Caco-2 (cell line): ENCODE measurements at regions of chr22 and their contacts with region 1.

Region 1: GRCh38 chr22:17171313-17172171 is 12.5 kb upstream of the HDHD5 start:
- DNase-seq: peak; percentile 89 to 94
- H3K4me3 ChIP-seq: peak overlapping the region; percentile 69
- H3K4me3 Mint-ChIP-seq: peak overlapping the region; percentile 89
- H3K27ac Mint-ChIP-seq: peak overlapping the region; percentile 84
- H3K4me1 ChIP-seq: 0 out of 2 replicates have a peak, but pooled peaks cover 3% of the 10 kb centered on the region
- H3K4me1 Mint-ChIP-seq: peaks cover 7% of the 10 kb centered on the region
- H3K27me3 ChIP-seq: no peaks in the 10 kb centered on the region
- H3K27me3 Mint-ChIP-seq: peaks cover 5% of the 10 kb centered on the region
- CTCF ChIP-seq: peak; percentile 65 to 93

Region 2: DNA sequence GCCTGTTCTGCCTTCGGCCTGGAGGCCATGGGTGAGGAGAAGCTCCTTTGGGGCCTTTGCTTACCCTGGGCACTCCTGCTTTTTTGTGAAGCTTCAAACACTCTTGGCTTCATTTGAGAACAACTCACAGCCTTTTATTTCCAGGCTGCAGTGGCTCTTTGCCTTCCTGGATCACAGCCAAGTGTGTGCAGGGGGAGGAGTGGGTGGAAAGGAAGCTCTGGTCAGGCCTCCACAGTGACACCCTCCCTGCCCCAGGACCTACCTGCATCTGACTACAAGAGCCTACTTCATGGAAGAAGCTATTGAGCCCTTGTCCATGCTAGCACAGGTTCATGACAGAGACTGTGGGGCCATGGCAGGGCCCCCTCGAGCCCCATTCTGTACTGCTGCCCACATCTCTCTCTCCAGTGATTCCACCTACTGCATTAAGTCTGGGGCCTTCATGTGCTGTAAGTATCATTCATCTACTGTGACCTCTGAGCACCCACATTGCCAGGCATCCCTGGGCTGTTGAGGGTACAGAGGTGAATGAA is 215.8 kb before region 1 on chr22:
- CTCF ChIA-PET with region 1: no interaction called
- POLR2A ChIA-PET with region 1: no interaction called
- intact Hi-C with region 1: no loop called
- DNase-seq: no peak
- H3K4me3 ChIP-seq: no peak overlapping the region
- H3K4me3 Mint-ChIP-seq: no peak overlapping the region
- H3K27ac Mint-ChIP-seq: no peak overlapping the region
- H3K4me1 ChIP-seq: no peaks in the 10 kb centered on the region
- H3K4me1 Mint-ChIP-seq: no peaks in the 10 kb centered on the region
- H3K27me3 ChIP-seq: no peaks in the 10 kb centered on the region
- H3K27me3 Mint-ChIP-seq: peaks cover 2% of the 10 kb centered on the region
- CTCF ChIP-seq: no peak

Region 3: DNA sequence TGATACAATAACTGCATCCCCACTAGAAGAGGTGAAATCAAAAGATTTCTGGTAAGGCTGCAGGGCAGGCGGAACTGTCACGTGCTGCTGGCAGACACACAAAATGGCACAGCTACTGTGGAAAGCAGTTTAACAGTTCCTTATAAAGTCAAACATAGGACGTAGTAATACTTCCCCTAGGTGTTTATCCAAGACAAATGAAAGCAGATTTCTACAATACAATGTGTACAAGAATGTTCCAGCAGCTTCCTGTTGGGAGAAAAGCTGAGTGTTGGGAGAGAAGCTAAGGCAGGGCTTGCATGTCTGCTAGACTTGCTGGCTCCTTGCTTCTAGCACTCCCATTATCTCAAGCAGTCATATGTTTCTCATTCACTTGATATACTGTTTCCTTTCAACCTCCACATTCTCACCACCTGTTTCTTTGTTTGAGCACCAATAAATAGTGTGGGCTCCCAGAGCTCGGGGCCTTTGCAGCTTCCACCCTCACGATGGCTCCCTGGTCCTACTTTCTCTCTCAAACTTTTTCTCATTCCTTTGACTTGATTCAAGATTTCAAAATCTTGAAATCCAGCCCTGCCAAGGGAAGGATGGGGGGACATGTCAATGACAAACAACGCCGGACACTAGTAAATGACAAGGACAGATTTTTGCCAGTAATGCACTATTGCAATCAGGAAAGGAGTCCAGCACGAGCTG is 108.0 kb before region 1 on chr22:
- CTCF ChIA-PET with region 1: interaction called, 10 read pairs
- POLR2A ChIA-PET with region 1: no interaction called
- intact Hi-C with region 1: no loop called
- DNase-seq: no peak
- H3K4me3 ChIP-seq: no peak overlapping the region
- H3K4me3 Mint-ChIP-seq: no peak overlapping the region
- H3K27ac Mint-ChIP-seq: no peak overlapping the region
- H3K4me1 ChIP-seq: peaks cover 12% of the 10 kb centered on the region
- H3K4me1 Mint-ChIP-seq: peaks cover 18% of the 10 kb centered on the region
- H3K27me3 ChIP-seq: no peaks in the 10 kb centered on the region
- H3K27me3 Mint-ChIP-seq: no peaks in the 10 kb centered on the region
- CTCF ChIP-seq: no peak

Region 4: DNA sequence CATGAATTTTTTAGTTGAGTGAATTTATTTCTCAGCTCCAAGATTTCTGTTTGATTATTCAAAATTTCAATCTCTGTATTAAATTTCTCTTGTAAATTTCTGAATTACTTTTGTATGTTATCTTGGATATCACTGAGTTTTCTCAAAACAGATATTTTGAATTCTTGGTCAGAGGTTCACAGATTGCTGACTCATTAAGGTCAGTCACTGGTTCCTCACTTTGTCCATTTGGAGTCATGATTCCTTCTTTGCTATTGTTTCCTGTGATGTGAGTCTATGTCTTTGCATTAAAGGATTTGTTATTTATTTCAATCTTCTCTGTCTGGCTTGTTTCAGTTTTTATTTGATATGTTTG is 96.9 kb before region 1 on chr22:
- CTCF ChIA-PET with region 1: interaction called, 13 read pairs
- POLR2A ChIA-PET with region 1: no interaction called
- intact Hi-C with region 1: loop called (anchors 1 kb)
- DNase-seq: no peak
- H3K4me3 ChIP-seq: no peak overlapping the region
- H3K4me3 Mint-ChIP-seq: no peak overlapping the region
- H3K27ac Mint-ChIP-seq: no peak overlapping the region
- H3K4me1 ChIP-seq: no peaks in the 10 kb centered on the region
- H3K4me1 Mint-ChIP-seq: no peaks in the 10 kb centered on the region
- H3K27me3 ChIP-seq: no peaks in the 10 kb centered on the region
- H3K27me3 Mint-ChIP-seq: peaks cover 4% of the 10 kb centered on the region
- CTCF ChIP-seq: no peak

Region 5: GRCh38 chr22:17087498-17088131 is 83.9 kb before region 1 on chr22:
- CTCF ChIA-PET with region 1: no interaction called
- POLR2A ChIA-PET with region 1: no interaction called
- intact Hi-C with region 1: no loop called
- DNase-seq: no peak
- H3K4me3 ChIP-seq: no peak overlapping the region
- H3K4me3 Mint-ChIP-seq: no peak overlapping the region
- H3K27ac Mint-ChIP-seq: no peak overlapping the region
- H3K4me1 ChIP-seq: no peaks in the 10 kb centered on the region
- H3K4me1 Mint-ChIP-seq: peaks cover 8% of the 10 kb centered on the region
- H3K27me3 ChIP-seq: no peaks in the 10 kb centered on the region
- H3K27me3 Mint-ChIP-seq: no peaks in the 10 kb centered on the region
- CTCF ChIP-seq: no peak

Region 6: DNA sequence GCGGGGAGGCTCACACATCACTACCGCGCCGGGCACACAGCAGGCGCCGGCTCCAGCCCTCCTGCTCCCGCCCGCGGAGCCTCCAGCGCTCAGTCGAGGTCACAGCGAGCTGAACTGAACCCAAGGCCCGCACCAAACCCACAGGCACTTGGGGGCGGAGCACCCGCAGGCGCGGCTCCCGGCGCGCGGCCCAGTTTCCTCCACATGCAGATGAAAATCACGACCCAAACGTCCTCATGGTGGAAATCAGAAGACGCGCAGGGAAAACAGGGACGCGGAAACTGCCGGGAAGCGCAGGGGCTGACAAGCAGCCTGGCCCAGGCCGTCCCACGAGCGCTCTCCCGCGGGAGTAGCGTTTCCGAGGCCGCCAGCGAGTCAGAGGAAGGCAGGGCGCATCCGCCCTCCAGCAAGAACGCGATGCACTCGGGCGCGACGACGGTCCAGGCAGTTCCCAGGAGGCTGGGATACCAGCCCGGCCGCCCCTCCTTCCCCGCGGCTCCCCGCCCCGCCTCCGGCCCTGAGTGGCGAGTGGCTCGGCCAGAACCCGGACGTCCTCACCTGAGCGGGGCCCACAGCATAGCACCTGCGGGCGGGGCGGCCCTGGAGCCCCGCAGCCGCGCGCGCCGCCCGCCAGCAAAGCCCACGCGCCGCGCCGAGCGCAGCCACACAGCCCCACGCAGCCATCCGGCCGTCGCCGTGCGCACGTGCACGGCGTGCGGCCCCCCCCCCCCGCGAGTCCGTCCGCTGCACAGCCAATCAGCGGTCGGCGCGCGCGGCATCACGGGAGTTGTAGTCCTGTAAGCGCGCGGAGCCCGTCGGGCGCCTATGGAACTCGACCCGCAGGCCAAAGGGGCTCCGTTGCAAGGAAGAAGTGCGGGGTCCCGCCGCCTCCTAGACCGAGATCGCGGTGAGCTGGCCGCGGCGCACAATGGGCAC is 12.7 kb before region 1 on chr22 and contains the start of gene HDHD5:
- CTCF ChIA-PET with region 1: interaction called, 21 read pairs
- POLR2A ChIA-PET with region 1: interaction called, 4 read pairs
- intact Hi-C with region 1: loop called (anchors 1 kb)
- DNase-seq: peak; percentile 90 to 91
- H3K4me3 ChIP-seq: peak within 1 kb of the TSS; percentile 97
- H3K4me3 Mint-ChIP-seq: peak within 1 kb of the TSS; percentile 86
- H3K27ac Mint-ChIP-seq: peak within 1 kb of the TSS; percentile 69
- H3K4me1 ChIP-seq: 0 out of 2 replicates have a peak, but pooled peaks cover 3% of the 10 kb centered on the region
- H3K4me1 Mint-ChIP-seq: no peaks in the 10 kb centered on the region
- H3K27me3 ChIP-seq: no peaks in the 10 kb centered on the region
- H3K27me3 Mint-ChIP-seq: no peaks in the 10 kb centered on the region
- CTCF ChIP-seq: no peak
- total RNA-seq, gene HDHD5: 57.0 and 63.7 TPM in 2 replicates

Region 7: DNA sequence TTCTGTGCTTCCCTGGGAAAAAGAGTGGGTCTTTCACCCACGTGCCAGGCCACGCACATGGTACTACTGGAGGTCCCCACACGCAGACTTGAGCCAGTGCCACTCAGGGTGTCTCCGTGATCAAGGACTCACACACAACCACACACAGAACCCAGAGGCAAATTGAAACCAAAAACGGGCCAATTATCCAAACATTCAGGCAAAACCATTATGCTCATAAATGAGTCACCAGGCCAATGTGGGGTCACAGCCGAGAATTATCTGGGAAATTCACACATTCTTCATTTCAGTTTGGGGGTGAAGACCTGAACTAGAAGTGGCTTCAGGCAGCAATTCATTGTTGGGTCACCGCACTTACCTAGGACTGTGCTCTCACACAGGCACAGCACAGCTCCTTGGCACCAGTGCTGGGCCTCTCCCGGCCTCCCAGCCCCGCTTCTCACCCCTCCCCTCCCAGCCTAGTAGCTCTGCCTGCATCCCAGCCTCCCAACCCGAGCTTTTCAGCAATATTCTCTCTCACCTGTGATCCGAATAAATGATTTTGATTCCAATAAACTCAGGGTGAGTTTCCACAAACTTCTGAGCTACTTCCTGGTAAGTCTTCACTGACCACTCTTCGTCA is 19.7 kb after region 1 on chr22:
- CTCF ChIA-PET with region 1: interaction called, 14 read pairs
- POLR2A ChIA-PET with region 1: no interaction called
- intact Hi-C with region 1: no loop called
- DNase-seq: no peak
- H3K4me3 ChIP-seq: no peak overlapping the region
- H3K4me3 Mint-ChIP-seq: no peak overlapping the region
- H3K27ac Mint-ChIP-seq: no peak overlapping the region
- H3K4me1 ChIP-seq: no peaks in the 10 kb centered on the region
- H3K4me1 Mint-ChIP-seq: no peaks in the 10 kb centered on the region
- H3K27me3 ChIP-seq: no peaks in the 10 kb centered on the region
- H3K27me3 Mint-ChIP-seq: peaks cover 2% of the 10 kb centered on the region
- CTCF ChIP-seq: no peak

Region 8: GRCh38 chr22:17201285-17201945 is 29.9 kb after region 1 on chr22:
- CTCF ChIA-PET with region 1: interaction called, 12 read pairs
- POLR2A ChIA-PET with region 1: no interaction called
- intact Hi-C with region 1: no loop called
- DNase-seq: peak in 1 of 2 experiments; percentile 12
- H3K4me3 ChIP-seq: no peak overlapping the region
- H3K4me3 Mint-ChIP-seq: no peak overlapping the region
- H3K27ac Mint-ChIP-seq: no peak overlapping the region
- H3K4me1 ChIP-seq: no peaks in the 10 kb centered on the region
- H3K4me1 Mint-ChIP-seq: peaks cover 7% of the 10 kb centered on the region
- H3K27me3 ChIP-seq: no peaks in the 10 kb centered on the region; the same call in 1 of the 2 replicates
- H3K27me3 Mint-ChIP-seq: peaks cover 3% of the 10 kb centered on the region
- CTCF ChIP-seq: peak in 1 of 2 experiments; percentile 30

Region 9: DNA sequence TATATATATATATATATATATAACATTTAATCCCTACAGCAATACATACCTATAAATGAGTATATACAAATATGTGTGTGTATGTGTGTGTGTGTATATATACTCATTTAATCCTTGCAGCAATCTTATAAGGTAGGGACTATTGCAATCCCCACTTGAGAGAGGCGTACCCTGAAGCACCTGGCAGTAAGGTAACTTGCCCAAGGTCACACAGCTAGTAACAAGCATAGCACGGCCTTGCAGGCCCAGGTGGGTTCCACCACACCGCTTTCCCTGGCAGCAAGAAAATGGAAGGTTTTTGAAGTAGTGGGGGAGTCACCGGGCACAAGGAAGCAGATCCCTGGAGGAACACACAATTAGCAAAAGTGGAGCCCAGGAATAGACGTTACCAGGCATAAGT is 51.0 kb after region 1 on chr22:
- CTCF ChIA-PET with region 1: no interaction called
- POLR2A ChIA-PET with region 1: no interaction called
- intact Hi-C with region 1: no loop called
- DNase-seq: no peak
- H3K4me3 ChIP-seq: no peak overlapping the region
- H3K4me3 Mint-ChIP-seq: no peak overlapping the region
- H3K27ac Mint-ChIP-seq: no peak overlapping the region
- H3K4me1 ChIP-seq: no peaks in the 10 kb centered on the region
- H3K4me1 Mint-ChIP-seq: no peaks in the 10 kb centered on the region
- H3K27me3 ChIP-seq: no peaks in the 10 kb centered on the region
- H3K27me3 Mint-ChIP-seq: peaks cover 3% of the 10 kb centered on the region
- CTCF ChIP-seq: no peak

Region 10: GRCh38 chr22:17368554-17369438 is 197.3 kb after region 1 on chr22:
- CTCF ChIA-PET with region 1: interaction called, 14 read pairs
- POLR2A ChIA-PET with region 1: no interaction called
- intact Hi-C with region 1: no loop called
- DNase-seq: peak; percentile 36 to 39
- H3K4me3 ChIP-seq: peak overlapping the region; percentile 45
- H3K4me3 Mint-ChIP-seq: peak overlapping the region; percentile 77
- H3K27ac Mint-ChIP-seq: no peak overlapping the region
- H3K4me1 ChIP-seq: no peaks in the 10 kb centered on the region
- H3K4me1 Mint-ChIP-seq: peaks cover 18% of the 10 kb centered on the region
- H3K27me3 ChIP-seq: no peaks in the 10 kb centered on the region; the same call in 1 of the 2 replicates
- H3K27me3 Mint-ChIP-seq: peaks cover 28% of the 10 kb centered on the region
- CTCF ChIP-seq: no peak